Activated CD8-positive, alpha-beta memory T cell treated with anti-CD3 and anti-CD28 coated beads, Interleukin-2, amount 10 ng/mL, durations not matched to agents 7 days and 5 days (primary cell): ENCODE measurements at regions of chr3 and their contacts with region 1.

Region 1: DNA sequence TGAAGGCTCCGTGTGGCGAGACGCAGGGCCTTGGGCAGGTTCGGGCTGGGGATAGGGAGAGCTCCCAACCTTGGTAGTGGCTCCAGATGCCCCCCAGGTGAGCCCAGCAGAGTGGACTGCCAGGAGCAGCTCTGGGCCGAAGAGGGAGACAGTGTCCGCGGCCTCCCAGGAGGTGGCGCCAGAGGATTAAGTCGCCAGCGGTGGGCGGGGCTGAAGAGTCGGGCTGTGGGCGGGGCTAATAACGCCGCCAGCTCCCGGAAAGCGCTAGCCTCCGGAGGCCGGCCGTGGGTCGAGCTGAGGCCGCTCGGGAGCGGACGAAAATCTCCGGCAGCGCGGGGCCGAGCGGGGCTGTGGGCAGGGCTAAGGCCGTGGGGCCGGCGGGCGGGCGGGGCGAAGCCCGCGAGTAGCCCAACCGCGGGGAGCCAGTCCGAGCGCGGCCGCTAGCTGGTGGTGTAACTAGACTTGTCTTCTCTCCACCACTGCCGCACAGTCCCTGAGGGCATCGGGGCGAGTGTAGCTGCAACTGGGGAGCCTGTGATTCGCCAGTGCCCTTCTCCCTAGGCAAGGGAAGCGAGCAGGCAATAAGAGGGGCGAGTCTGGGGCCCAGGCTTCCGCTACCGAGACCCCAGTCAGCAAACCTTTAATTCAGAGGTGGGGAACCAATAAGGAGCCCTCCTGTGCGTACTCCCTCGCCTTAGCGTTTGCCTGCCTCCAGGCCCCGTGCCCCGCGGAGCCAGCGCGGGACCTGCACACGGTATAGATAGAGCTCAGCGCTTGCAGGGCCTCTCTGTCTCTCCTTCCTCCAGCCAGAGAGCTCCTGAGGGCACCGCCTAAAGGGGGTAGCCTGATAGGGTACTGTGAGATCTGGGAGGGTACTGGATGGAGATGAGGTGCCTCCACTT is 14.4 kb upstream of the BSN start:
- DNase-seq: peak; percentile 93
- ATAC-seq: peak; percentile 92
- H3K4me3 Mint-ChIP-seq: peak overlapping the region; percentile 68
- H3K27ac Mint-ChIP-seq: peak overlapping the region; percentile 28
- H3K4me1 Mint-ChIP-seq: peaks cover 3% of the 10 kb centered on the region
- H3K27me3 Mint-ChIP-seq: peaks cover 17% of the 10 kb centered on the region

Region 2: GRCh38 chr3:49553692-49554632 is 14.1 kb after region 1 on chr3 and contains the start of gene BSN:
- CTCF ChIA-PET with region 1: interaction called, 55 read pairs
- DNase-seq: peak; percentile 92
- ATAC-seq: peak; percentile 92
- H3K4me3 Mint-ChIP-seq: peak within 1 kb of the TSS; percentile 82
- H3K27ac Mint-ChIP-seq: peak within 1 kb of the TSS; percentile 50
- H3K4me1 Mint-ChIP-seq: peaks cover 31% of the 10 kb centered on the region
- H3K27me3 Mint-ChIP-seq: peaks cover 41% of the 10 kb centered on the region
- total RNA-seq, gene BSN: 0.12 TPM

Region 3: DNA sequence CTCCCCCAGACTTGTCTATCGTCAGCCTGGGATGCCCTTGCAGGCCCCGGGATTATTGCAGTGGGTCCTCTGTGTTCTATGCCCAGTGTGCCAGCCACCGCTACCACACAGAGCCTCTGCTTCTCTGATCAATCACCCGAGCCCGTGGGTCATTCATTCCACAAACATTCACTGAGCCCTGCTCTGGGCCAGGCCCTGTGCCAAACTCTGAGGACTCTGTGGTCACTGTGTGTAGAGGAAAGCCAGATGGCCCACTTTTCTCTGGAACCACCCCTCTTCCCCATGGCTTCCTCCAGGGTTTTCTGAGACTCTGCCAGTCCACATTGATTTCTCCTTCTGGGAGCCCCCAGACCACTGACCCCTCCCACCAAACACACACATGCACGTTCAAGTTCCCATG is 69.9 kb after region 1 on chr3:
- CTCF ChIA-PET with region 1: interaction called, 12 read pairs
- DNase-seq: no peak
- ATAC-seq: no peak
- H3K4me3 Mint-ChIP-seq: no peak overlapping the region
- H3K27ac Mint-ChIP-seq: no peak overlapping the region
- H3K4me1 Mint-ChIP-seq: no peaks in the 10 kb centered on the region
- H3K27me3 Mint-ChIP-seq: no peaks in the 10 kb centered on the region

Region 4: DNA sequence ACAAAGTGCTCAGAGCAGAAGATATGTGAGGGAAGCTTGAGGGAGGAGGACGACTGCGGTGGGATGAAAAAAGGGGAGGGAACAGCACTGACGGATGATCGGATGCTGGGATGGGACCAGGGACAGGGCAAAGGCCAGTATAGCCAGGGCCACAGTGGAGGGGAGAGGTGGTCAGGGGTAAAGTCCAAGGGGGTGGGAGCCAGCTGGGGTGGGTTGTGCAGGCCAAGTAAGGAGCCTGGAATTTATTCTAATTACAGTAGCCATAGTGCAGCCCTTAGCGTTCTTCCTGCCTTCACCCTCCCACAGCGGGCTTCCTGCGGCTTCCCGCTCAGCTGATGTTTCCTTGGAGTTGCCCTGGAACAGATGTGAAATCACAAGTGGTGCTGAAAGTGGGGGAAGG is 126.7 kb after region 1 on chr3:
- CTCF ChIA-PET with region 1: interaction called, 272 read pairs
- DNase-seq: no peak
- ATAC-seq: no peak
- H3K4me3 Mint-ChIP-seq: no peak overlapping the region
- H3K27ac Mint-ChIP-seq: no peak overlapping the region
- H3K4me1 Mint-ChIP-seq: peaks cover 5% of the 10 kb centered on the region
- H3K27me3 Mint-ChIP-seq: no peaks in the 10 kb centered on the region

Region 5: DNA sequence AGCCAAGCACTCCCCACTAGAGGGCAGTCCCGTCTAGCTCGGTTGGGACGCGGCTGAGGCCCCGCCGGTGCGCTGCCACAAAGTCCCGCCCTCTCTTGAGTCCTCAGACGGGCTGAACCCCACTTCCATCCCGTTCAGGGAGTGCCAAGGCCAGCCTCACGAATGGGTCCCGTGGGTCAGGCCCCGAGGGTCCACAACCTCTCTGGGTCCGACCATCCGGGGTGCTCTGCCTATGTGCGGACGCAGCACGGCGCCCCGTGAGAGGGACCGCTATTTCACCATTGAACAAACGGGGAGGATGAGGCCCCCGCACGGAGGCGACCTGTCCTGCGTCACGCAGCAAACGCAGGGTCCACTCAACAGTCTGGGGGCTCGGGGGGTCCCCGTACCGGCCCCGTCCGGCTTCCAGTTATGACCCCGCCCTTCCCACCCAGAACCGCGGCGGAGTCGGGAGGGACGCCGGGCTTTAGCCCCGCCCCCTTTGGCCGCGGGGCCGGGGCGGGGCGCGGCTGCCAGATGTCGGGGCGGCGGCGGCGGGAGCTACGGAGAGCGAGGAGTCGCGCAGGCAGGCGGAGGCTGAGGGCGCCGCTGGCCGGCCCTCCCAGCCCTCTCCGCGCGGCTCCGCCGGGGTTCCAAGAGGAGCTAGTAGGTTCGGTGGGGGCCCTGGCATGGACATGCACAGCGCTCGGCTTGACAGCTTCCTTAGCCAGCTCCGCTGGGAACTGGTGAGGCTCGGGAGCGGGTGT is 263.0 kb after region 1 on chr3 and contains the start of gene INKA1:
- CTCF ChIA-PET with region 1: interaction called, 12 read pairs
- DNase-seq: peak; percentile 93
- ATAC-seq: peak; percentile 89
- H3K4me3 Mint-ChIP-seq: peak within 1 kb of the TSS; percentile 80
- H3K27ac Mint-ChIP-seq: peak within 1 kb of the TSS; percentile 76
- H3K4me1 Mint-ChIP-seq: peaks cover 31% of the 10 kb centered on the region
- H3K27me3 Mint-ChIP-seq: peaks cover 11% of the 10 kb centered on the region
- total RNA-seq, gene INKA1: 0.73 to 0.85 TPM